Cardiac septum (tissue), 1 donor: ENCODE measurements at regions of chr15 and their contacts with region 1.

Region 1: GRCh38 chr15:96356494-96357455 is 26.3 kb downstream of the NR2F2 start:
- DNase-seq: peak; percentile 85

Region 2: GRCh38 chr15:95025924-95026728 is 1330.6 kb before region 1 on chr15:
- intact Hi-C with region 1: loop called (anchors 10 kb)
- DNase-seq: no peak

Region 3: DNA sequence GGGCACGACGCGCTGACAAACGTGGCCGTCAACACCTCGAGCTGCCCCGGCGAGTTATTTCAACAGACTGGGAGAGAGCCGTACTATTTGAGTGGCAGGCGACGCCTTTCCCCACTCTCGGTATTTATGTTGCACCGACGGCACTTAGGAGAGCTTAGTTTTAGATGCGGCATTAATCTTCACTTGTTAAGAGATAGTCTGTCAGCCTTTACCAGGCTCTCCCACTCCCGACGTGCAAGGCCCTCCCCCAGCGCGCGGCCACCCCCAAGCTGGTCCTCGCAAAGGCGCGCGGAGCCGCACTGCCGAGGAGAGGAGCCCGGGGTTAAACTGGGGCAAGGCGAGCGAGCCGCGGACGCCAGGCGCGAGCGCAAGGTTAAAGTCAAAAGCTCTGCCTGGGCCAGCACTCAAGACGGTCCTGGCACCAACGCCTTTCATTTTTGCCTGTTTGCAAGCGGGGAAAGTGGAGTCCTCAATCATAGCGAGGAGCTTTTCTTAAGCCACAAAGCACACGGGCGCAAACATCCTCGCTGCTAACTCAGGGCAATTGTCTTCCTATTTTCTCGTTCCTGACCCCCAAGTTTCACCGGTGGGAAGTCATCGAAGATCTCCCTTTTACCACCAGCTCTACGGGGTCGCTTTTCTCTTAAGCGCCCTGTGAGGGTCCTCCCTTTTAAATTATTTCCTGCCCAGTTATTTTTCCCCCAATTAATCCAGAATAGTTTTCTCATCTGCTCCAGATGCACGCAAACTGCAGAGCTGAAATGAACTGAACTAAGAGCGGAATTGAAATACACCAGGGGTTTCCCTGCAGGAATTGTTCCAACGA is 60.4 kb after region 1 on chr15:
- intact Hi-C with region 1: loop called (anchors 10 kb)
- DNase-seq: no peak

Region 4: GRCh38 chr15:96583688-96584087 is 226.9 kb after region 1 on chr15:
- intact Hi-C with region 1: loop called (anchors 5 kb)
- DNase-seq: no peak

Region 5: GRCh38 chr15:96893159-96893906 is 536.6 kb after region 1 on chr15:
- intact Hi-C with region 1: loop called (anchors 5 kb)
- DNase-seq: no peak

Region 6: GRCh38 chr15:97234851-97235610 is 878.3 kb after region 1 on chr15:
- intact Hi-C with region 1: loop called (anchors 5 kb)
- DNase-seq: no peak

Region 7: GRCh38 chr15:97759363-97759762 is 1402.6 kb after region 1 on chr15:
- intact Hi-C with region 1: loop called (anchors 10 kb)
- DNase-seq: no peak